Prostate gland (tissue), 2 donors: ENCODE measurements at regions of chr9 and their contacts with region 1.

Region 1: GRCh38 chr9:109320742-109321448 is at the start of gene EPB41L4B:
- DNase-seq: peak; percentile 93
- H3K4me3 ChIP-seq: peak within 1 kb of the TSS; percentile 34 to 41
- H3K27ac ChIP-seq: peak within 1 kb of the TSS; percentile 54 to 56
- H3K4me1 ChIP-seq: peaks cover 6% of the 10 kb centered on the region
- H3K27me3 ChIP-seq: no peaks in the 10 kb centered on the region
- CTCF ChIP-seq: peak; percentile 97 to 99 (median 98)
- POLR2A ChIP-seq: peak; percentile 37
- total RNA-seq, gene EPB41L4B: 13.3 to 15.1 TPM

Region 2: DNA sequence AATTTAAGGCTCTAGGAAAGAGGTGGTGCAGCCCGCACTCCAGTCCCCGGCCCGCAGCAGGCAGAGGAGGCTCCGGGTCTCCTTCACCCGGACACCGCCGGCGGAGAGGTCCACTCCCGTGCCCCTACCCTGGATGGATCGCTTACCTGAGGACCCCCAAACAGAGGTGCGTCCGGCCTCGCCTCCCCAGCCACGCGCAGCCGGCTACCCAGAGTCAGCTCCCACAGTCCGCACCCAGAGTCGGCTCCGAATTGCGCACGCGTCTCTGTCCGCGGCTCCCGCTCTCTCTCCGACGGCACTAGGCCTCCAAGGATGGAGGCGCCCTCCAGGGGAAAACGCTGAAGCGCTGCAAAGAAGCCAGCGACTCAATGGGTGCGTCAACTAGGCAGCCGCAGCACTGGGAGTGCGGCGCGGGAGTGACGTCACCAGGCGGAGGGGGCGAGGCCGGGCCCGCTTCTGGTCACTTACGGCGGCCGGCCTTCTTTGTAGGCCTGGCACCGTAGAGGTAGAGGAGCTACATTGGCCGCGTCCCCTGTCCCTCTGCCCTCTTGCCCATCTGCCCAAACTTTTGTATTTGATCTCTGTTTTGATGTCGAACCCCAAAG is 387.1 kb before region 1 on chr9 and contains the start of gene ELP1:
- intact Hi-C with region 1: loop called (anchors 10 kb)
- DNase-seq: peak; percentile 88
- H3K4me3 ChIP-seq: peak within 1 kb of the TSS; percentile 71 to 72
- H3K27ac ChIP-seq: peak within 1 kb of the TSS; percentile 89 to 91
- H3K4me1 ChIP-seq: peaks cover 6% of the 10 kb centered on the region
- H3K27me3 ChIP-seq: no peaks in the 10 kb centered on the region
- CTCF ChIP-seq: peak in 2 of 4 experiments; percentile 13 to 36
- POLR2A ChIP-seq: peak; percentile 43
- total RNA-seq, gene ELP1: 18.4 to 30.3 TPM

Region 3: GRCh38 chr9:109244157-109245132 is 76.5 kb before region 1 on chr9:
- intact Hi-C with region 1: loop called (anchors 5 kb)
- DNase-seq: peak; percentile 76
- H3K4me3 ChIP-seq: no peak overlapping the region
- H3K27ac ChIP-seq: no peak overlapping the region
- H3K4me1 ChIP-seq: peaks cover 7% of the 10 kb centered on the region
- H3K27me3 ChIP-seq: no peaks in the 10 kb centered on the region
- CTCF ChIP-seq: peak; percentile 80 to 86 (median 82)
- POLR2A ChIP-seq: no peak

Region 4: DNA sequence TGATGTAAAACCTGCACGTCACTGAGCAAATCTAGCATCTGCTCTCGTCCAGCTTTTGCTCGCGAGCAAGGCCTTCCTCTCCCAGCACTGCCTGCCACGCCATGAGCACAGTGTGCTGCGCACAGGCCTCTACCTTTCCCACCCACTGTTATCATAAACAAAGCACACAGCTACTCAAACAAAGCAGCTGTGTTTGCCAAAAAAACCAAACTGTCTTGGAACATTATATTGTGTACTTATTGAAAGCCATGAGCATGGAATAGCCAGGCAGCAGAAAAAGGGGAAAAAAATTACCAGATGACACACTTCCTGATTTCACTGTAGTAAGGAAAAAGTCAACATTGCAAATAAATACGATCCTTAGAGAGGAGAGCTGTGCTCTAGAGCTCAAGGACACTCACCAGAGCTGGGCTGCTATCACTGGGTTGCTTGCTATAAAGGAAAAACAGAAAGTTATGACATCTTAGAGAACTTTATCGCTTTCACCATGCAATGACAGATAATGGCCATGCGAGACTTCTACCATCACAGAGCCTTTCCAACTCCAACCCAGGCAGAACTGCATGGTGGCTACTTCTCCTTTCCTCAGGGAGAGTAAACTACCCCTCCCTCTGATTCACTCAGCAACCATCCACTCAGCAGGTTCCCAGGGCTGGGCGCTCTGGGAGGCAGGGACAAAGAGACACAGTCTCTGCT is 69.7 kb before region 1 on chr9:
- intact Hi-C with region 1: loop called (anchors 5 kb)
- DNase-seq: peak; percentile 48
- H3K4me3 ChIP-seq: no peak overlapping the region
- H3K27ac ChIP-seq: peak overlapping the region; percentile 46 to 64
- H3K4me1 ChIP-seq: peaks cover 2% of the 10 kb centered on the region
- H3K27me3 ChIP-seq: no peaks in the 10 kb centered on the region
- CTCF ChIP-seq: no peak
- POLR2A ChIP-seq: no peak